Sigmoid colon (tissue), 7 donors: ENCODE measurements at regions of chr15 and their contacts with region 1.

Region 1: GRCh38 chr15:78299101-78299930 is at the start of gene SKIC8:
- DNase-seq: peak; percentile 95
- H3K4me3 ChIP-seq: peak within 1 kb of the TSS; percentile 76 to 89 (median 81)
- H3K27ac ChIP-seq: peak within 1 kb of the TSS; percentile 82 to 85 (median 83)
- H3K4me1 ChIP-seq: peaks cover 0 to 17% (median 10%) of the 10 kb centered on the region in 4 donors
- H3K27me3 ChIP-seq: peaks cover 0 to 7% (median 0%) of the 10 kb centered on the region in 3 donors
- CTCF ChIP-seq: no peak
- EP300 ChIP-seq: no peak
- POLR2A ChIP-seq: peak; percentile 72 to 93
- total RNA-seq, gene SKIC8: 43.2 to 58.2 (median 52.0) TPM

Region 2: GRCh38 chr15:78243491-78243941 is 55.8 kb before region 1 on chr15:
- intact Hi-C with region 1: no loop called
- DNase-seq: peak; percentile 79
- H3K4me3 ChIP-seq: no peak overlapping the region
- H3K27ac ChIP-seq: no peak overlapping the region
- H3K4me1 ChIP-seq: peaks cover 0 to 11% (median 7%) of the 10 kb centered on the region in 4 donors
- H3K27me3 ChIP-seq: no peaks in the 10 kb centered on the region
- CTCF ChIP-seq: no peak
- EP300 ChIP-seq: no peak
- POLR2A ChIP-seq: no peak

Region 3: GRCh38 chr15:78265752-78266593 is 33.3 kb before region 1 on chr15:
- intact Hi-C with region 1: loop called (anchors 2 kb)
- DNase-seq: no peak
- H3K4me3 ChIP-seq: peak overlapping the region in 2 of 4 donors; percentile 62 to 74
- H3K27ac ChIP-seq: peak overlapping the region; percentile 65 to 88 (median 80)
- H3K4me1 ChIP-seq: peaks cover 2 to 47% (median 30%) of the 10 kb centered on the region in 4 donors
- H3K27me3 ChIP-seq: no peaks in the 10 kb centered on the region
- CTCF ChIP-seq: no peak
- EP300 ChIP-seq: peak in 3 of 4 donors; percentile 42 to 96 (median 74)
- POLR2A ChIP-seq: no peak